CD4-positive, alpha-beta memory T cell (primary cell): ENCODE measurements at regions of chr2 and their contacts with region 1.

Region 1: GRCh38 chr2:121736462-121737341 is at the start of gene NIFK:
- DNase-seq: peak; percentile 99 to 100 (median 99)
- H3K4me3 ChIP-seq: peak within 1 kb of the TSS; percentile 80 to 88
- H3K4me3 Mint-ChIP-seq: peak within 1 kb of the TSS; percentile 94 to 99 (median 98)
- H3K27ac ChIP-seq: peak within 1 kb of the TSS; percentile 80
- H3K27ac Mint-ChIP-seq: peak within 1 kb of the TSS; percentile 94 to 98 (median 97)
- H3K4me1 ChIP-seq: peaks cover 31% of the 10 kb centered on the region
- H3K4me1 Mint-ChIP-seq: peaks cover 15 to 51% (median 32%) of the 10 kb centered on the region in 4 donors
- H3K27me3 ChIP-seq: no peaks in the 10 kb centered on the region
- H3K27me3 Mint-ChIP-seq: no peaks in the 10 kb centered on the region
- total RNA-seq, gene NIFK: 61.6 to 62.8 TPM

Region 2: GRCh38 chr2:121699421-121700333 is 37.0 kb before region 1 on chr2:
- CTCF ChIA-PET with region 1: interaction called, 3 read pairs
- POLR2A ChIA-PET with region 1: interaction called, 27 read pairs
- intact Hi-C with region 1: loop called (anchors 1 kb)
- DNase-seq: peak; percentile 80 to 98 (median 83)
- H3K4me3 ChIP-seq: peak overlapping the region; percentile 5 to 36
- H3K4me3 Mint-ChIP-seq: peak overlapping the region; percentile 82 to 92 (median 84)
- H3K27ac ChIP-seq: peak overlapping the region; percentile 55
- H3K27ac Mint-ChIP-seq: peak overlapping the region; percentile 92 to 99 (median 99)
- H3K4me1 ChIP-seq: peaks cover 32% of the 10 kb centered on the region
- H3K4me1 Mint-ChIP-seq: peaks cover 27 to 51% (median 36%) of the 10 kb centered on the region in 4 donors
- H3K27me3 ChIP-seq: no peaks in the 10 kb centered on the region
- H3K27me3 Mint-ChIP-seq: no peaks in the 10 kb centered on the region

Region 3: GRCh38 chr2:121755236-121756111 is 18.8 kb after region 1 on chr2 and contains the start of gene TSN:
- CTCF ChIA-PET with region 1: interaction called, 5 read pairs
- POLR2A ChIA-PET with region 1: interaction called, 31 read pairs
- intact Hi-C with region 1: loop called (anchors 1 kb)
- DNase-seq: peak; percentile 96 to 98 (median 97)
- H3K4me3 ChIP-seq: peak within 1 kb of the TSS; percentile 97 to 98
- H3K4me3 Mint-ChIP-seq: peak within 1 kb of the TSS; percentile 85 to 99 (median 93)
- H3K27ac ChIP-seq: peak within 1 kb of the TSS; percentile 75
- H3K27ac Mint-ChIP-seq: peak within 1 kb of the TSS; percentile 79 to 99 (median 96)
- H3K4me1 ChIP-seq: peaks cover 24% of the 10 kb centered on the region
- H3K4me1 Mint-ChIP-seq: peaks cover 18 to 42% (median 26%) of the 10 kb centered on the region in 4 donors
- H3K27me3 ChIP-seq: no peaks in the 10 kb centered on the region
- H3K27me3 Mint-ChIP-seq: no peaks in the 10 kb centered on the region
- total RNA-seq, gene TSN: 52.4 to 54.0 TPM

Region 4: GRCh38 chr2:121974897-121975661 is 238.4 kb after region 1 on chr2:
- CTCF ChIA-PET with region 1: interaction called, 3 read pairs
- POLR2A ChIA-PET with region 1: no interaction called
- intact Hi-C with region 1: loop called (anchors 10 kb)
- DNase-seq: peak; percentile 43 to 62 (median 56)
- H3K4me3 ChIP-seq: peak overlapping the region; percentile 39 to 46
- H3K4me3 Mint-ChIP-seq: peak overlapping the region; percentile 79 to 87 (median 82)
- H3K27ac ChIP-seq: no peak overlapping the region
- H3K27ac Mint-ChIP-seq: peak overlapping the region in 5 of 7 donors; percentile 36 to 76 (median 62)
- H3K4me1 ChIP-seq: peaks cover 4% of the 10 kb centered on the region
- H3K4me1 Mint-ChIP-seq: peaks cover 6 to 15% (median 10%) of the 10 kb centered on the region in 4 donors
- H3K27me3 ChIP-seq: no peaks in the 10 kb centered on the region
- H3K27me3 Mint-ChIP-seq: peaks cover 0 to 2% of the 10 kb centered on the region in 2 donors